ENCODE measurements at regions of chr9 and their contacts with region 1.

Region 1: GRCh38 chr9:104927912-104928740 is at the start of gene ABCA1:
- DNase-seq: peak; percentile 89 to 93
- ATAC-seq: peak; percentile 84 to 90 (median 88)
- H3K4me3 ChIP-seq: peak within 1 kb of the TSS; percentile 71 to 94 (median 86)
- H3K27ac ChIP-seq: peak within 1 kb of the TSS; percentile 71 to 97 (median 85)
- H3K4me1 ChIP-seq: peaks cover 3 to 46% (median 20%) of the 10 kb centered on the region in 9 donors
- H3K27me3 ChIP-seq: peaks cover 0 to 3% (median 0%) of the 10 kb centered on the region in 7 donors
- CTCF ChIP-seq: no peak
- total RNA-seq, gene ABCA1: 7.6 to 35.0 (median 13.8) TPM

Region 2: GRCh38 chr9:104863180-104863883 is 64.8 kb before region 1 on chr9:
- intact Hi-C with region 1: loop called in 7 of 10 experiments (anchors 2 to 10 kb)
- DNase-seq: peak in 1 of 2 donors; percentile 50
- ATAC-seq: peak; percentile 63 to 75 (median 73)
- H3K4me3 ChIP-seq: no peak overlapping the region
- H3K27ac ChIP-seq: peak overlapping the region in 4 of 10 donors; percentile 10 to 66 (median 34)
- H3K4me1 ChIP-seq: peaks cover 6 to 82% (median 35%) of the 10 kb centered on the region in 9 donors
- H3K27me3 ChIP-seq: no peaks in the 10 kb centered on the region
- CTCF ChIP-seq: peak; percentile 38 to 89 (median 77)

Region 3: GRCh38 chr9:104879555-104880309 is 48.4 kb before region 1 on chr9:
- intact Hi-C with region 1: loop called in 1 of 10 experiments (anchors 5 kb)
- DNase-seq: no peak
- ATAC-seq: peak in 5 of 8 donors; percentile 12 to 72 (median 56)
- H3K4me3 ChIP-seq: no peak overlapping the region
- H3K27ac ChIP-seq: peak overlapping the region in 9 of 10 donors; percentile 35 to 75 (median 54)
- H3K4me1 ChIP-seq: peaks cover 0 to 33% (median 21%) of the 10 kb centered on the region in 9 donors
- H3K27me3 ChIP-seq: no peaks in the 10 kb centered on the region
- CTCF ChIP-seq: no peak

Region 4: DNA sequence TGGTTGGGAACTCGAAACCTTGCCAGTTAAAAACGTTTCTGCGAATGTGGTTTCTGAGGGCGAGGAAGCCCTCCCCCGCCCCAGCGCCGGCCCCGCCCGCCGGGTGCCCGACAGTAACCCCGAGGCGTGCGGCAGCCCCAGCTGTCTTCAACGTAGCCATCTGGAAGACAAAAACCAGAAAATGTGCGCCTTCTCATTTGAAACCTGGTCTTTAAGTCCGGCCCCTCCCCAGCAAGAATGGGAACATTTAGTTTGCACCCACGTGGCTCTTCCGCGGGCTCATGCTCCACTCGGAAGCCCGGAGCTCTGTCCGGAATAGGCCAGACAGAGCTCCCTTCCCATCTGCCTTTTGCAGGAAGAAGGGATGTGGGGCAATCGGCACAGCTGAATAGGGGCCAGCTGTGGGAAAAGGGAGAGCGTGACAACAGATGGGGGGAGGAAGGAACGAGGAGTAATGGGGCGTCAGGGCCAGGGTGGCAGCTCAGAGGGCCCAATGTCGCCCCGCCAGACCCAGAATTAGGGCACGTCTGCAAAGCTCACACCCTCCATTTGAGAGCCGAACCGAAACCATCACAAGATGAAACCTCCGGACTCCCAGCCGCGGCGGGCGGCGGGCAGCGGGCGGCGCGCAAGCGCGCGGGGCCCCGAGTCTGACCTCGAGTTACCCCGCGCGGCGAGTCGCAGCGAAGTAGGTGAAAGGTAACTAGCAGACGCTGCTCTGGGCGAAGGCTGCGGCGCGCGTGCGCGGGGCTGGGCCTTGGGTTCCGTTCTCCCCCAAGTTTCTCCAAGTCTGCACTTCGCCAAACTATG is 63.2 kb after region 1 on chr9:
- intact Hi-C with region 1: loop called in 3 of 10 experiments (anchors 1 to 5 kb)
- DNase-seq: peak; percentile 90 to 93
- ATAC-seq: peak; percentile 85 to 93 (median 89)
- H3K4me3 ChIP-seq: peak overlapping the region; percentile 46 to 70 (median 66)
- H3K27ac ChIP-seq: peak overlapping the region; percentile 87 to 97 (median 94)
- H3K4me1 ChIP-seq: peaks cover 19 to 58% (median 38%) of the 10 kb centered on the region in 9 donors
- H3K27me3 ChIP-seq: no peaks in the 10 kb centered on the region
- CTCF ChIP-seq: peak in 1 of 9 donors; percentile 5

Region 5: GRCh38 chr9:105064315-105065097 is 136.4 kb after region 1 on chr9:
- intact Hi-C with region 1: loop called in 2 of 10 experiments (anchors 5 kb)
- DNase-seq: peak; percentile 89 to 90
- ATAC-seq: peak; percentile 96 to 98 (median 97)
- H3K4me3 ChIP-seq: peak overlapping the region in 4 of 10 donors; percentile 3 to 26 (median 14)
- H3K27ac ChIP-seq: peak overlapping the region; percentile 10 to 93 (median 76)
- H3K4me1 ChIP-seq: peaks cover 11 to 54% (median 24%) of the 10 kb centered on the region in 9 donors
- H3K27me3 ChIP-seq: no peaks in the 10 kb centered on the region
- CTCF ChIP-seq: peak in 2 of 9 donors; percentile 9 to 11

Region 6: GRCh38 chr9:105244003-105244733 is 316.0 kb after region 1 on chr9 and contains the start of gene SLC44A1:
- intact Hi-C with region 1: loop called in 4 of 10 experiments (anchors 5 to 10 kb)
- DNase-seq: peak; percentile 97 to 99
- ATAC-seq: peak; percentile 98 to 100 (median 98)
- H3K4me3 ChIP-seq: peak within 1 kb of the TSS; percentile 62 to 91 (median 84)
- H3K27ac ChIP-seq: peak within 1 kb of the TSS; percentile 73 to 89 (median 80)
- H3K4me1 ChIP-seq: peaks cover 0 to 61% (median 43%) of the 10 kb centered on the region in 9 donors
- H3K27me3 ChIP-seq: no peaks in the 10 kb centered on the region
- CTCF ChIP-seq: peak in 3 of 9 donors; percentile 9 to 29 (median 26)
- total RNA-seq, gene SLC44A1: 12.6 to 29.0 (median 19.0) TPM

Region 7: DNA sequence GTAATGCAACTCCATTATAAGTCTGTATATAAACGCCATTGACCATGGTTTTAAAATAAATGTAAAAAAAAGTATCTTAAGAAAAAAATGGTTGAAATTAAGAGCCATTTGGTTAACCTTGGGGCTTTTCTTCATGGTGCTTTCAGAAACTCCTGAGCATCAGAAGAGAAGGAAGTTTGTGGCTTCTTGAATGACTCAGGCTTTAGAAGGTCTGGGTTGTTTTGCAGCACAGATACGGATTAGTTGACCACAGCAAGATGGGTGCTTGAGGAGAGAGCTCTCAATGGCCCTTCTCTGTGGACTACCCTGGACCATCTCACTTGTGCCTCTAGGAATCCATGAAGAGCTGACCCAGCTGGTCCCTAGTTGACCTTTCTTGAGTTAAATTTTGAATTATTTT is 955.7 kb after region 1 on chr9:
- intact Hi-C with region 1: no loop called
- DNase-seq: no peak
- ATAC-seq: no peak
- H3K4me3 ChIP-seq: no peak overlapping the region
- H3K27ac ChIP-seq: no peak overlapping the region
- H3K4me1 ChIP-seq: no peaks in the 10 kb centered on the region
- H3K27me3 ChIP-seq: no peaks in the 10 kb centered on the region
- CTCF ChIP-seq: no peak